ENCODE measurements at regions of chr17 and their contacts with region 1.

Region 1: DNA sequence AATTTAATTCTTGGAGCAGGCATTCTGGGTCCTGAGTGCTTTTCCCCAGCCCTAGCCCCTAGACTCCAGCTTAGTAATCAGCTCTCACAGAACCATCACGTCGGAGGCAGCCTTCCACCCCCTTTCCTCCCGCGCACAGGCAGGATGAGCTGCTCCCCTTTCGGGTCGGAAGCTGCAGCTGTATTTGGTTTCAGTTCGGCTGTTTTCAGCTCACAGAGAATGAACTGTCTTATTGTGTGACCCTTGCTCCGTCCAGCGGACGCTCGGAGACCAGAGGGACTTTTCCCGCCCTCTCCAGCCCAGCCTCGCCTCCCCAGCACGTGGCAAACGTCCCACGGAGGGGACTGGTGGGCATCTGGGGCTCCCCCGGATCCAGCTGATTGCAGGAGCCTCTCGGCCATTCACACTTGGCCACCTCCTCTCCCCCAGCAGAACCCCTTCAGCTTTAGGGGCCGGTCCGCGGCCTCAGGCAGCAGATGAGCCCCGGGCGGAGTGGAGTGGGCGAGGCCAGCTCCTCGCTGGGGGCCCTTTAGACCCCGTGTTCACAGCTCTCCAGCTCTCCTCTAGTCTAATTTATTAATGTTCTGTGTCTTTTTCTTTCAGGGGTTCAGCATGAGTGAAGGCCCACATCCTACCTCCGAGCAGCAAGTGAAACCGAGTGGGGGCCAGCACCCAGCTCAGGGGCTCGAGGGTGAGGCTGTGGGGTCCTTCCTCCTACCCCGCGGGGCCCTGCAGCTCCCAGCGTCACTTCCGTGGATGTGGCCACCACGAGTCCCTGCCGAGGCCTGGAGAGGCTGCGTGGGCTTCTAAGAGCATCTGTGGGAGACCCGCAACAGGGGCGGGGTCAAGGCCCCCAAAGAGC is 863 bp upstream of the UTS2R start:
- DNase-seq: no peak
- ATAC-seq: peak; percentile 13; the same call in 2 of the 3 replicates
- H3K4me3 ChIP-seq: peak overlapping the region; percentile 17 to 59 (median 39); a peak in 5 of 6 replicates
- H3K27ac ChIP-seq: peak overlapping the region; percentile 47
- H3K4me1 ChIP-seq: peaks cover 73% of the 10 kb centered on the region
- H3K27me3 ChIP-seq: no peaks in the 10 kb centered on the region
- CTCF ChIP-seq: peak; percentile 50
- EP300 ChIP-seq: no peak
- POLR2A ChIP-seq: no peak
- RAD21 ChIP-seq: no peak

Region 2: DNA sequence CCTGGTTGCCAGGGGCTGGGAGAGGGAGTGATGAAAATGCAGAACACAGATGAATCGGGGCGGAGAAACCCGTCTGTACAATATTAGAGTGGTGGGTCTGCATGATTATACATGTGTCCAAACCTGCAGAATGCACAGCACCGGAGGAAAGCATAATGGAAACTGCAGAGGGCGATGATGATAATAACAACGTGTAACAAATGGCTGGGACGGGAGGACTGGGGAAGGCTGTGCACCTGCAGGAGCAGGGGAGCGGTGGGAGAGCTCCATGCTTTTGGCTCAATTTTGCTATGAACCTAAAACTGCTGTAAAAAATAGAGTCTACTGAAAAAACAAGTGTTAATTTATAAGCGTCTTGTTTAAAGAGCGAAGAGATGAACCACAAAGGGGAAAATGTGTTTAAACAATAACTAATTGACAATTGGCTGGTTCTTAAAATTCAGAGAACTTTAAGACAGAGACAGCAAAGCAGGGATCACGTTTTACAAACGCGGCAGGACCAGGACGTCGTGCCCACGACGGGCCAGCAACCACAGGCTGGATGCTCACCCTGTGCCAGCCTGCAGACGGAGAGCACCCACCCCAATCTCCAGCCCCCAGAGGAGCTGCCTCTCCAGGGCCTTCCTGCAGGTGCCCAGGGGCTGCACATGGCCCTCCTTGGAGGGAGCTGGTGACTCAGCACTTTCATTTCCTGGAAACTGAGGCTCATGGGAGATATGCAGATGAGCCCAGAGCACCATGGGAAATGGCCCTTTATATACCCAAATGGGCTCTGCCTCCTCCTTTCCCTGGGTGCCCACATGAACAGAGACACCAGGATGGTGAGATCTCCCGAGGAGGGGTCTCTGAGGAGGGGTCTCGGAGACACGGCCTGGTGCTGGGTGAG is 12.0 kb before region 1 on chr17 and contains the start of gene TEX19:
- CTCF ChIA-PET with region 1: no interaction called
- POLR2A ChIA-PET with region 1: interaction called, 36 read pairs
- in situ Hi-C with region 1: no loop called
- intact Hi-C with region 1: no loop called
- DNase-seq: no peak
- ATAC-seq: peak; percentile 19; the same call in 2 of the 3 replicates
- H3K4me3 ChIP-seq: no peak within 1 kb of the TSS
- H3K27ac ChIP-seq: no peak within 1 kb of the TSS
- H3K4me1 ChIP-seq: peaks cover 62% of the 10 kb centered on the region
- H3K27me3 ChIP-seq: no peaks in the 10 kb centered on the region
- CTCF ChIP-seq: peak; percentile 53
- EP300 ChIP-seq: no peak
- POLR2A ChIP-seq: 0 out of 4 replicates have a peak, but pooled peaks of 1 of the 2 experiments have one; percentile 22
- RAD21 ChIP-seq: no peak
- total RNA-seq, gene TEX19: 1.3 and 1.8 TPM in 2 replicates

Region 3: GRCh38 chr17:82384730-82385481 is 14.2 kb after region 1 on chr17:
- CTCF ChIA-PET with region 1: no interaction called
- POLR2A ChIA-PET with region 1: interaction called, 13 read pairs
- in situ Hi-C with region 1: no loop called
- intact Hi-C with region 1: no loop called
- DNase-seq: peak; percentile 74
- ATAC-seq: peak; percentile 76
- H3K4me3 ChIP-seq: peak overlapping the region in 1 of 3 experiments; percentile 41; a peak in 1 of 6 replicates
- H3K27ac ChIP-seq: no peak overlapping the region
- H3K4me1 ChIP-seq: peaks cover 49% of the 10 kb centered on the region
- H3K27me3 ChIP-seq: peaks cover 8 to 40% of the 10 kb centered on the region in 2 experiments; a peak in 3 of 5 replicates
- CTCF ChIP-seq: peak; percentile 74
- EP300 ChIP-seq: peak in 1 of 2 experiments; percentile 42; a peak in 2 of 4 replicates
- POLR2A ChIP-seq: no peak
- RAD21 ChIP-seq: peak; percentile 39; the same call in 1 of the 2 replicates

Measured in HepG2 (cell line).